Psoas muscle (tissue), 8 donors: ENCODE measurements at regions of chr9 and their contacts with region 1.

Region 1: GRCh38 chr9:84170521-84171141 is 169.9 kb downstream of the SLC28A3 start:
- DNase-seq: peak; percentile 76 to 94
- ATAC-seq: peak; percentile 87 to 96 (median 91)
- H3K4me3 ChIP-seq: no peak overlapping the region
- H3K27ac ChIP-seq: peak overlapping the region; percentile 79
- H3K4me1 ChIP-seq: peaks cover 32% of the 10 kb centered on the region
- H3K27me3 ChIP-seq: no peaks in the 10 kb centered on the region
- CTCF ChIP-seq: no peak

Region 2: DNA sequence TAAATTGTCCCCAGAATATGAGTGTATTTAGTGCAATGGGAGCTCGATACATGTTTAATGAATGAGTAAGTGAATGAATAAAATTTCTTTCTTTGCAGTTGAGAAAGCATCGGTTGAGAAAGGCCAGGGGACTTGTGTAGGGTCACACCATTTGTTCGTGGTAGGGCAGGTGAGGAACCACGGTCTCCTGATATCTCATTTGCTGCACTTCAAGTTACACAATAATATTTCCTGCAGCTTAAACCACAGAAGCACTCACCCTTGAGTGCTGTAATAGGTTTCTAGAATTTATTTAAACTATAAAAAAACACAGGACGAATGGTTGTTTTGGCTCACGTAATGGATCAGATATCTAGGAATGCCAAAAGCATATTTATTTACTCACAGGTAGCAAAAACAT is 1752.3 kb before region 1 on chr9:
- intact Hi-C with region 1: no loop called
- DNase-seq: no peak
- ATAC-seq: no peak
- H3K4me3 ChIP-seq: no peak overlapping the region
- H3K27ac ChIP-seq: no peak overlapping the region
- H3K4me1 ChIP-seq: no peaks in the 10 kb centered on the region
- H3K27me3 ChIP-seq: no peaks in the 10 kb centered on the region
- CTCF ChIP-seq: no peak

Region 3: DNA sequence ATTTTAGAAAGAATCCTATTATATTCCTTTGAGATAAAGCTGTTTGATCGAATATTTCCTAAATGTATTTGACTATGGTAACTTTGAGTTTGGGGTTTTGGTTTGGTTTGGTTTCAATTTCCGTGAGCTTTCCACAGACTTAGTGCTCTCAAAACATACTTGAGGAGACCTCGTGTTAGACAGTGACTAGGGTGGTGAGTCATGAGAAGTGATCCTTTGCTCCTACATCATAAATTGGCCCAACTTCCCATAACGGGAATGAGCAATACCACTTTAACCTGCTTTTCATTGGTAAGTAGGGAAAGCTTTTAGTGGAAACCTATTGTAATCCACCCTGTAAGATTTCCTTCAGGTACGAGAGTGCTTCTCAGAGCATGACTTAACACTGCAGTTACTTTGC is 1103.9 kb before region 1 on chr9:
- intact Hi-C with region 1: no loop called
- DNase-seq: no peak
- ATAC-seq: no peak
- H3K4me3 ChIP-seq: no peak overlapping the region
- H3K27ac ChIP-seq: no peak overlapping the region
- H3K4me1 ChIP-seq: peaks cover 9% of the 10 kb centered on the region
- H3K27me3 ChIP-seq: peaks cover 0 to 33% (median 15%) of the 10 kb centered on the region in 3 donors
- CTCF ChIP-seq: no peak

Region 4: DNA sequence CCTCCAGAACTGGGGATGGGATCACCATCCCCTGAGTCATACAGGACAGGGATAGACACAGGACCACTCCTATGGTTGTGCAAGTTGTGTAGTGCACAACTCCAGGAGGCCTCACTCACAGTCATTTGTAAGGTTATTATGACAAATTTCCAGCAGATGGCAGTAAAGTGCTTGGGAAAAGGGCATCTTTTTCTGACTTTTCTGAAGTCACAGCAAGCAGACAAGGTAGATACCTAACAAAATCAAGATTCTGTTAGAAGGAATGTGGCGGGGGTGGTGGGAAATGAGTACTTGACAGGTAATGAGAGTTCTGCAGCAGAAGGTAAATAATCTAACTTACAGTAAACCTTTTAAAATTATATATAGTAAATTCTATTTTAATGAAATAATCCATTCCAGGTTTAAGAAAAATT is 232.7 kb before region 1 on chr9:
- intact Hi-C with region 1: loop called (anchors 5 kb)
- DNase-seq: no peak
- ATAC-seq: peak; percentile 46 to 78 (median 72)
- H3K4me3 ChIP-seq: no peak overlapping the region
- H3K27ac ChIP-seq: no peak overlapping the region
- H3K4me1 ChIP-seq: peaks cover 28% of the 10 kb centered on the region
- H3K27me3 ChIP-seq: no peaks in the 10 kb centered on the region
- CTCF ChIP-seq: peak; percentile 72

Region 5: GRCh38 chr9:83980395-83981125 is 190.1 kb before region 1 on chr9 and contains the start of gene RMI1:
- intact Hi-C with region 1: loop called (anchors 5 kb)
- DNase-seq: peak; percentile 100
- ATAC-seq: peak; percentile 90 to 93 (median 92)
- H3K4me3 ChIP-seq: peak within 1 kb of the TSS; percentile 96
- H3K27ac ChIP-seq: peak within 1 kb of the TSS; percentile 100
- H3K4me1 ChIP-seq: peaks cover 34% of the 10 kb centered on the region
- H3K27me3 ChIP-seq: no peaks in the 10 kb centered on the region
- CTCF ChIP-seq: no peak
- total RNA-seq, gene RMI1: 3.9 to 4.5 (median 4.1) TPM

Region 6: DNA sequence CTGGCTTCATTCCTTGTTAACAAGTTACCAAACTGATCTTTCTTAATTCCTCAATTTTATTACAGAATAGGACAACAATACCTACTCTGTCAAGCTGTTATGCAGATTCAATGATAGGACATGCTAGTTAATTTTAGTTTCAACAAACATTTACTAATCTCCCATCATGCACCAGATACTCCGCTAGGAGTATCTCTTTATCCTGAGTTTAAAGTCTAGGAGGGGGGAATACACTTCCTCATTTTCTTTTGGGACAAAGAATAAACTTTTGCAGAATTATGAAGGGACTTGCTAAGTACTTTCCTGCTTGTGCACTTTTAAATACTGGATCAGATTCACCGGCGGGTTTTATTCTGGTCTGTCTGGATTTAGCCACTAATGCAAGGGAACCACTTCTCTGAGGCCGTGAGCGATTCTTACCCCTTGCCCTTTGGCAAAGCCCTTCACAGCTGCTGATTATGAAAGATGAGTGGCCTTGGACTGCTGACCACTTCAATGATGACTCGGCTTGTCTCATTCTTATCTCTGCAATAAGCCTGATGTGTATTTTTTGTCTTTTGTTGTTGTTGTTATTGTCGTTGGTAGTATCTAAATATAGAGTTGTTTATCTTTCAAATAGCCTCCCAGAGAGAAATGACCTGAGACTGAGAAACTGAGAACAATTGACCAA is 116.2 kb before region 1 on chr9:
- intact Hi-C with region 1: loop called in 1 of 2 experiments (anchors 5 kb)
- DNase-seq: peak in 1 of 2 donors; percentile 58
- ATAC-seq: peak; percentile 87 to 95 (median 92)
- H3K4me3 ChIP-seq: no peak overlapping the region
- H3K27ac ChIP-seq: peak overlapping the region; percentile 70
- H3K4me1 ChIP-seq: peaks cover 31% of the 10 kb centered on the region
- H3K27me3 ChIP-seq: no peaks in the 10 kb centered on the region
- CTCF ChIP-seq: no peak

Region 7: GRCh38 chr9:84061594-84062193 is 108.9 kb before region 1 on chr9:
- intact Hi-C with region 1: loop called in 1 of 2 experiments (anchors 5 kb)
- DNase-seq: no peak
- ATAC-seq: no peak
- H3K4me3 ChIP-seq: no peak overlapping the region
- H3K27ac ChIP-seq: peak overlapping the region; percentile 44
- H3K4me1 ChIP-seq: peaks cover 16% of the 10 kb centered on the region
- H3K27me3 ChIP-seq: no peaks in the 10 kb centered on the region
- CTCF ChIP-seq: no peak

Region 8: GRCh38 chr9:84261082-84261746 is 90.6 kb after region 1 on chr9:
- intact Hi-C with region 1: loop called in 1 of 2 experiments (anchors 5 kb)
- DNase-seq: peak; percentile 81 to 91
- ATAC-seq: peak; percentile 97 to 100 (median 98)
- H3K4me3 ChIP-seq: peak overlapping the region; percentile 22
- H3K27ac ChIP-seq: no peak overlapping the region
- H3K4me1 ChIP-seq: no peaks in the 10 kb centered on the region
- H3K27me3 ChIP-seq: peaks cover 0 to 2% (median 0%) of the 10 kb centered on the region in 3 donors
- CTCF ChIP-seq: peak; percentile 97